PC-9 (cell line): ENCODE measurements at regions of chr17 and their contacts with region 1.

Region 1: DNA sequence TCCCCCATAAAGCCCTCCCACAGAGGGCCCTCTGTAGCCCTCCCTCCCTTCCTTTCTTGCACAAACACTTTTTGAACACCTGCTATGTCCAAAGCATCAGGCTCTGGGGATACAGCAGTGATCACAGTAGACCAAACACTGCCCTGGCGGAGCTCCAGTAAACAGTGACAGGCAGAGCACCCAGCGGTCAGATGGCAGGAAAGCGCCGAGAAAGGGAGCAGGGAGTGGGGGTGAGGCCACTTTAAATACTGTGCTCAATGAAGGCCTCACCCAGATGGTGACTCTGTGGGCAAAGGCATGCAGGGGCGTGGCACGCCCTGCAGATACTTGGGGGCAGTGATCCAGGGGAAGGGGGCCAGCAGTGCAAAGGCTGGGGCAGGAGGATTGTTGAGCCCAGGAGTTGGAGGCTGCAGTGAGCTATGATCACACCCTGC is 7.6 kb downstream of the PRR29 start:
- DNase-seq: peak; percentile 66 to 72
- H3K4me3 ChIP-seq: no peak overlapping the region
- H3K27ac ChIP-seq: 0 out of 2 replicates have a peak overlapping the region, but pooled peaks have one; percentile 11
- H3K4me1 ChIP-seq: peaks cover 65% of the 10 kb centered on the region
- H3K27me3 ChIP-seq: no peaks in the 10 kb centered on the region
- CTCF ChIP-seq: no peak

Region 2: GRCh38 chr17:63512896-63513644 is 492.7 kb before region 1 on chr17:
- CTCF ChIA-PET with region 1: no interaction called
- POLR2A ChIA-PET with region 1: no interaction called
- intact Hi-C with region 1: no loop called
- DNase-seq: no peak
- H3K4me3 ChIP-seq: no peak overlapping the region
- H3K27ac ChIP-seq: no peak overlapping the region
- H3K4me1 ChIP-seq: no peaks in the 10 kb centered on the region; the same call in 1 of the 2 replicates
- H3K27me3 ChIP-seq: peaks cover 60% of the 10 kb centered on the region
- CTCF ChIP-seq: no peak

Region 3: GRCh38 chr17:63919311-63919723 is 86.4 kb before region 1 on chr17:
- CTCF ChIA-PET with region 1: interaction called, 15 read pairs
- POLR2A ChIA-PET with region 1: no interaction called
- intact Hi-C with region 1: no loop called
- DNase-seq: peak in 1 of 2 experiments; percentile 66
- H3K4me3 ChIP-seq: no peak overlapping the region
- H3K27ac ChIP-seq: no peak overlapping the region
- H3K4me1 ChIP-seq: no peaks in the 10 kb centered on the region
- H3K27me3 ChIP-seq: peaks cover 18% of the 10 kb centered on the region; the same call in 1 of the 2 replicates
- CTCF ChIP-seq: peak; percentile 96

Region 4: GRCh38 chr17:64020056-64020766 is 14.5 kb after region 1 on chr17 and contains the start of gene ICAM2:
- CTCF ChIA-PET with region 1: interaction called, 13 read pairs
- POLR2A ChIA-PET with region 1: no interaction called
- intact Hi-C with region 1: no loop called
- DNase-seq: no peak
- H3K4me3 ChIP-seq: no peak within 1 kb of the TSS
- H3K27ac ChIP-seq: no peak within 1 kb of the TSS
- H3K4me1 ChIP-seq: no peaks in the 10 kb centered on the region
- H3K27me3 ChIP-seq: no peaks in the 10 kb centered on the region
- CTCF ChIP-seq: no peak
- total RNA-seq, gene ICAM2: 7.8 and 9.2 TPM in 2 replicates

Region 5: DNA sequence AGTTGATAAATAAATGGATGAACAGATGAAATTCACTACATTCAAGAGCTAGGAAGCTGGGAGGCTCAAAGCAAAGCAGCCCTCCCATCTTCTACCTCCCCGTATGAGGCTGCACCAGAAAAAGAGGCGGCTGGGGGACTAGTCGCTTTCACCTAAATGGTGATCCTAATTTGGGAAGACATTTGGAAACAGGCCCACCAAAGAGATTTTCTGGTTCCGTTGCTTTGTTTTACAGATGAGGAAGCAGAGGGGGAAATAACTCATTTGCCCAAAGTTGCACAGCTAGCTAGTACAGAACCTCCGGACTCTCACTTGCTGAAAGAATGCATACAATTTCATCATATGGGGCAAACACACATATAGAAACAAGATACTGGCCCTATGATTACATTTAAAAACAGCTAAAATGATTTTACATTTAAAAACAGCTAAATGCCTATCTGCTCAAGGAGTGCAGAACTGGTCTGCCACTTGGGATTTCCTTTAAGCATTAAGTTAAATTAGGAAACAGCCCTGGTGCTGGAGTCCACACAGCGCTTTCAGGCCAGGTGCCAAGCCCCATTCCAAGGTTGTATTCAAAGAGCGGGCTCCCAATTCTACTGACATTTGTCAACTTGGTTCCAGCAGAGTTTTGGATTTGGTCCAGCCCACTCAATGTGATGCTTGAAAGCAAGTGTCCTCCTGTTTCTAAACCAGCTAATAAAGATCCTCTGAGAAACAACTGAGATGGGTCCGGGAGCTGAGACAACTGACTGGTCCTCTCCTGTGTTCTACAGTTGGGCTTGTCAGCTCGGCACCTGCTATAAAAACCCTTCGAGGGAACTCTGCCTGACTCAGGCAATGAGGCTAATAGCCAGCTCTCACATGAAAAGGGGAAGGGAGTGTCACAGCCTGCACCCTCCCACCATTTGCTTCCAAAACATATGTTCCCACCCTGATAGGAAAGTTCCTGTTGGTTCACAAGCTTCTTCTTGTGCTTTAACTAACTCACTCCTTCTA is 112.5 kb after region 1 on chr17:
- CTCF ChIA-PET with region 1: no interaction called
- POLR2A ChIA-PET with region 1: no interaction called
- intact Hi-C with region 1: no loop called
- DNase-seq: no peak
- H3K4me3 ChIP-seq: no peak overlapping the region
- H3K27ac ChIP-seq: 0 out of 2 replicates have a peak overlapping the region, but pooled peaks have one; percentile 86
- H3K4me1 ChIP-seq: peaks cover 53% of the 10 kb centered on the region
- H3K27me3 ChIP-seq: no peaks in the 10 kb centered on the region
- CTCF ChIP-seq: no peak